ENCODE measurements at regions of chr11 and their contacts with region 1.

Region 1: DNA sequence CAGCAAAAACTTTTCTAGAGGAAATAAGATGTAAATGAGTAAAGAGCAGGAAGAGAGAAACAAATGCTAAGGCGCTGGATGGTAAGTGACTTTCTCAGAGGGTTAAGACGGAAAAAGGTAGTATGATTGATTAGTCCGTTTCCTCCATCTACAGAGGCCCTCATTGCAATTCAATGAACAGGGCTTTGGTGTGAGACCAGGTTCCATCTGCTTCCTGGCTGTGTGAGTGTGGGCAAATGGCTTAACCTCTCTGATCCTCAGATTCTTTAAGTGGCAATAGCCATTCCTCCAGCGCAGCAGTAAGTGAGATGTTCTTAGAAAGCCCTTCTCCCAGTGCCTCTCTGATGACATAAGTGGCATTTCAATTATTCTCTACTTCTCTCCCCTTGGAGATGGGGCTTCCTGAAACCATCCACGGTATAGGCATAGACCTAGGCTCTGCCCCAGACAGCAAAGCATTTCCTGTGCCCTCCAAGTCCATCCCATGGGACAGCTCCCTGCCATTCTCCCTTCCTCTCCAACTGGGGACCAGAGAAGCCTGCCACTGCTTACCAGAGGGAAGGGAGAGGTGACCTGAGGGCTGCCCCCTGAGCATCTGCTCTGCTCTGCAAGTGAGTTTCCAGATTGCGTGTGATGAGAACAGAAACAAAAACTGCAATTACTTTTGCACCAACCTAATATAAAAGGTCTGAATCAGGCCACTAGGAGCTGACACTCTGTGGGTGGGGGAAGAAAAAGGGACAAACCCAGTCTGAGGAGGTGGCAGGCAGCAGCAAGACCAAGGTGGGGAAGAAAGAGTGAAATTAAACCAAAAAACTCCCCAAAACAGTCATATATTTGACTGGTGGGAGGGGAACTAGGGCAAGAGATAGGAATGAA is 12.7 kb upstream of the CD44 start:
- DNase-seq: no peak
- H3K4me3 ChIP-seq: no peak overlapping the region
- H3K27ac ChIP-seq: no peak overlapping the region
- H3K4me1 ChIP-seq: no peaks in the 10 kb centered on the region
- H3K27me3 ChIP-seq: no peaks in the 10 kb centered on the region
- CTCF ChIP-seq: no peak
- POLR2A ChIP-seq: no peak

Region 2: GRCh38 chr11:34492806-34493414 is 633.3 kb before region 1 on chr11:
- intact Hi-C with region 1: no loop called
- DNase-seq: peak in 1 of 2 donors; percentile 45
- H3K4me3 ChIP-seq: no peak overlapping the region
- H3K27ac ChIP-seq: no peak overlapping the region
- H3K4me1 ChIP-seq: no peaks in the 10 kb centered on the region
- H3K27me3 ChIP-seq: no peaks in the 10 kb centered on the region
- CTCF ChIP-seq: peak; percentile 25 to 67 (median 60)
- POLR2A ChIP-seq: no peak

Region 3: GRCh38 chr11:34926101-34926830 is 200.0 kb before region 1 on chr11:
- intact Hi-C with region 1: no loop called
- DNase-seq: no peak
- H3K4me3 ChIP-seq: no peak overlapping the region
- H3K27ac ChIP-seq: no peak overlapping the region
- H3K4me1 ChIP-seq: peaks cover 0 to 9% of the 10 kb centered on the region in 2 donors
- H3K27me3 ChIP-seq: no peaks in the 10 kb centered on the region
- CTCF ChIP-seq: peak; percentile 55 to 88 (median 62)
- POLR2A ChIP-seq: no peak

Region 4: GRCh38 chr11:35077709-35078469 is 48.4 kb before region 1 on chr11:
- intact Hi-C with region 1: no loop called
- DNase-seq: no peak
- H3K4me3 ChIP-seq: no peak overlapping the region
- H3K27ac ChIP-seq: no peak overlapping the region
- H3K4me1 ChIP-seq: no peaks in the 10 kb centered on the region
- H3K27me3 ChIP-seq: no peaks in the 10 kb centered on the region
- CTCF ChIP-seq: no peak
- POLR2A ChIP-seq: no peak

Region 5: GRCh38 chr11:35141571-35141971 is 15.3 kb after region 1 on chr11:
- intact Hi-C with region 1: loop called (anchors 1 kb)
- DNase-seq: peak in 1 of 2 donors; percentile 41
- H3K4me3 ChIP-seq: peak overlapping the region; percentile 67 to 92 (median 72)
- H3K27ac ChIP-seq: peak overlapping the region; percentile 92 to 96
- H3K4me1 ChIP-seq: peaks cover 0 to 25% of the 10 kb centered on the region in 2 donors
- H3K27me3 ChIP-seq: no peaks in the 10 kb centered on the region
- CTCF ChIP-seq: no peak
- POLR2A ChIP-seq: no peak

Region 6: GRCh38 chr11:36411202-36411640 is 1285.0 kb after region 1 on chr11:
- intact Hi-C with region 1: no loop called
- DNase-seq: no peak
- H3K4me3 ChIP-seq: no peak overlapping the region
- H3K27ac ChIP-seq: peak overlapping the region in 1 of 2 donors; percentile 61
- H3K4me1 ChIP-seq: no peaks in the 10 kb centered on the region
- H3K27me3 ChIP-seq: no peaks in the 10 kb centered on the region
- CTCF ChIP-seq: no peak
- POLR2A ChIP-seq: no peak